PC-9 (cell line): ENCODE measurements at regions of chr5 and their contacts with region 1.

Region 1: DNA sequence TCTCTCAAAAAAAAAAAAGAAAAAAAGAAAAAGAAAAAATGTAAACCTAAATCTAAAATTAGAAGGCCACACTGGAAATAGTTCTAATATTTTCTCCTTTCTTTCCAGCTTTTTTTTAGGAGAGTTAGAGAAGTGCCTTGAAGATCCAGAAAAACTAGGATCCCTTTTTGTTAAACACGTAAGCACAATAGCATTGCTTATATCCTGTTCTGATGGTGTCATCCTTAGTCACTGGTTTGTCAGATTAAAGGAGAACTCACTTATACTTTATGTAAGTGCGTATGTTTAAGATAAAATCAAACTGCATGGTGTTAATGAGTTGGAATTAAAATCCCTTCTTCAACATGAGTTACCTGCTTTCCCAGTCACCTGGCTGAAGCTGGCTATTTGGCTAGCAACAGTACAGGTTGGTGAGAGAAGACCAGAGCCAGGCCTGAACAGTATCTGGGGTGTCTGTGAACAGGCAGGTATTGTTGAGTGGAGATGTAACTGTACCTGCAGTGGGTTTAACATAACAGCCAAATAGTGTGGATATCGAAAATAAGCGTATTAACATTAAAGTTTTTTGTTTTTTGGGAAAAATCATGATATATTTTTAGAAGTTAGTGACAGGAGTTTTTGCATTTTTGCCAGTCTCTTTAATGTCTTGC is 104.7 kb upstream of the OTULINL start:
- DNase-seq: peak; percentile 22 to 42
- H3K4me3 ChIP-seq: no peak overlapping the region
- H3K27ac ChIP-seq: peak overlapping the region; percentile 30; the same call in 1 of the 2 replicates
- H3K4me1 ChIP-seq: peaks cover 12% of the 10 kb centered on the region; the same call in 1 of the 2 replicates
- H3K27me3 ChIP-seq: no peaks in the 10 kb centered on the region
- CTCF ChIP-seq: no peak

Region 2: DNA sequence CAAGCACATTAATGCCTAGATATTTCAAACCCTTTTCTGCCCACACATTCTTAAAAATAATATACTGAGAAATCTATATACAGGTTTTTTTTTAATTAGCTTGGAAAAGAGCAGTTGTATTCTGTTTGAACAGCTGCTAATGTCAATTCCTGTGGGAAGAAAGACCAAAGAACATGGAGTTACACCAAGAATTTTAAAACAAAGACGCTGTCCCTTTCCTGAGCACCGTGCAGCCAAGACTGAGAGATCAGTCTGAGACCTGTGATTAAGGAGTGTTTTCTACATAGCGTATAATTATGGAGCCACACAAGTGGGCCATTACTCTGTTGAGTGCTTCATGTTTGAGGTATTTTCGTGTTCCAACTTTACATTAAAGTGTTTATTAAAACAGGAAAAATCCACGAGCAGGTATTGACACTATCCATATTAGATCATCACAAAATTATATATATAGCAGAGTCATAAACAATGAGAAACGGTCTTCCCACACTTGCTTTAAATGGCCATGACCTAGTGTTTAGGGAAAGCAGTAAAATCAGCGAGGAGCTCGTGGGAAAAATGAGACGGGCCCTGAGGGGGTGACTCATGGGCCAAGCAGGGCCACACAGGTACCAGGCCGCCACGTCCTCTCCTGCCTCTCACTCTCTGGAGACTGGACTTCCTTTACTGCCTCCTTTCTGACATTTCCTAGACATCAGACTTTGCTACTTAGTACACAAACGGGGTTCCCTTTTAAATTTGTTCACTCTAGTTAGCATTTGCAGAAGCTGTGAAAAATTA is 48.4 kb before region 1 on chr5:
- CTCF ChIA-PET with region 1: no interaction called
- POLR2A ChIA-PET with region 1: interaction called, 9 read pairs
- intact Hi-C with region 1: loop called (anchors 5 kb)
- DNase-seq: no peak
- H3K4me3 ChIP-seq: no peak overlapping the region
- H3K27ac ChIP-seq: no peak overlapping the region
- H3K4me1 ChIP-seq: no peaks in the 10 kb centered on the region
- H3K27me3 ChIP-seq: no peaks in the 10 kb centered on the region
- CTCF ChIP-seq: no peak

Region 3: DNA sequence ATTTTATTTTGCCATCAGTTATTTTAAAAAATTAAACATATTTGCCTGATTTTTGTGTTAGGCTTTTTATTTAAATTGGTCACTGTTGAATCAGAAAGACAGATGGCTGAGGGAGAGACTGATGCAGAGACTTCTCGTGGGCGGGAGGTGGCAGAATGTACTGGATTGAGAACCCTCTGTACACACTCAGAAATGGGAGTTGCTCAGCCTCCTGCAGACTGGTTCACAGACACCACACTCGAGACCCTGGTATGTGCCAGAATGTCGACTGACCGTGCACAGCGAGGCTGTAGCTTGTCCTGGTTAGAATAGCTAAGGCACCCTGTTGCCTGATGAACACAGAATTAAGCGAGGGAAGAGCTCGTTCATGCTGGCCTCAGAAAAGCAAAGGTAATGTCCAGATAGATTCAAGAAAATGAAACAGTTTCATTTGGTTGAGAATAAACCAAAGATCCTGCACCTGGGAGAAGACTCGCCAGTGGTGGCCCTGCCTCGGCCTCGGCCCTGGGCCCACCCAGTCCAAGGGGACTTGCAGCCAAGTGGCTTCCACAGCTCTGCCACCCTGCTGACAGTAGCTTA is 33.3 kb after region 1 on chr5:
- CTCF ChIA-PET with region 1: no interaction called
- POLR2A ChIA-PET with region 1: no interaction called
- intact Hi-C with region 1: no loop called
- DNase-seq: no peak
- H3K4me3 ChIP-seq: no peak overlapping the region
- H3K27ac ChIP-seq: no peak overlapping the region
- H3K4me1 ChIP-seq: no peaks in the 10 kb centered on the region
- H3K27me3 ChIP-seq: no peaks in the 10 kb centered on the region
- CTCF ChIP-seq: no peak